GM12878 (cell line): ENCODE measurements at regions of chr7 and their contacts with region 1.

Region 1: DNA sequence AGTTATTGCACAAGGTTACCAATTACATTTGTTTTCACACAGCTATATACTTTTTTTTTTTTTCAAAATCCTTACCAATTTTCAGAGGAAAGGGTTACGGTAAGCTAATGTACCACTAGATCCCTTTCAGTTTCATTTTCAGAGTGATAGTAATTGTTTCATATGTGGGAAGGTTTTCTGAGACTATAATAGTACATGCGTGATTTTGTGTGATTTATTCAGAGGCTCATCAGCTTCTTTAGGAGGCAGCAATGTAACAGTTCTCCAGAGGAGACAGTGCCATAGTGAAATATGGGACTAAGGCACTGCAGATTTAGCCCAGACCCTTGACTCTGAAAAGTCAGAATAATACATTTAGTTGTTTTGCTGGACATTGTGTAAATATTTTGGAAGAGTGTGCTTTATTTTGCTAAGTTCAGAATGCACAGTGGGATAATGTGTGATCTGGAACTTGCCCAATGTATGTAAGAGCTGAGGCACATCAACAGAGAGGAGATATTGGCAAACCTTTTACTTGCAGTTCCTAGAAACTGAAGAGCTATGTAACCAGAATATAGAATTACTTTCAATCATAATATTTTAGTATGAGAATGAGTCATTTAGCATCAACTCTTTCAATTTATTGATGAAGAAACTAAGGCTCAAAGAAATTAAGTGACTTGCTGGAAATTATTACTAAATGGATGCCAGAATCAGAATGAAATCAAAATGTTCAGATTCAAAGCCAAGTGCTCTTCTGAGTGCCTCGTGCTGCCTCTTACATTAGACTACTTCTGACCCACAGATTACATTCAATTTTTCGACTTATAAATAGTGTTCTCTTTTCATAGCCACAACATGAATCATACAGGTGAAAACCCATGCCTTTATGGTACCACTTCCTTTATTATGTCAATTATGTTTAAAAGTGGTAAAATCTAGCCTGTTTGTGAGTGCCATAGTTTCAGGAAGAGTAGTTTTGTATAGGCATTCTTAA is 207.7 kb upstream of the TEX47 start:
- DNase-seq: peak; percentile 24
- ATAC-seq: peak; percentile 89
- H3K4me3 ChIP-seq: 0 out of 2 replicates have a peak overlapping the region, but pooled peaks have one; percentile 17
- H3K27ac ChIP-seq: peak overlapping the region; percentile 55
- H3K4me1 ChIP-seq: no peaks in the 10 kb centered on the region; the same call in 1 of the 2 replicates
- H3K27me3 ChIP-seq: no peaks in the 10 kb centered on the region
- CTCF ChIP-seq: no peak
- EP300 ChIP-seq: peak in 1 of 2 experiments; percentile 22; a peak in 1 of 4 replicates
- POLR2A ChIP-seq: no peak
- RAD21 ChIP-seq: no peak

Region 2: GRCh38 chr7:88635149-88635548 is 368.1 kb before region 1 on chr7:
- CTCF ChIA-PET with region 1: no interaction called
- POLR2A ChIA-PET with region 1: no interaction called
- RAD21 ChIA-PET with region 1: no interaction called
- SMC1A ChIA-PET with region 1: no interaction called
- in situ Hi-C with region 1: no loop called
- intact Hi-C with region 1: no loop called
- DNase-seq: no peak
- ATAC-seq: no peak
- H3K4me3 ChIP-seq: no peak overlapping the region
- H3K27ac ChIP-seq: no peak overlapping the region
- H3K4me1 ChIP-seq: no peaks in the 10 kb centered on the region
- H3K27me3 ChIP-seq: no peaks in the 10 kb centered on the region
- CTCF ChIP-seq: no peak
- EP300 ChIP-seq: no peak
- POLR2A ChIP-seq: no peak
- RAD21 ChIP-seq: no peak

Region 3: GRCh38 chr7:88771417-88771816 is 231.9 kb before region 1 on chr7:
- CTCF ChIA-PET with region 1: no interaction called
- POLR2A ChIA-PET with region 1: no interaction called
- RAD21 ChIA-PET with region 1: no interaction called
- SMC1A ChIA-PET with region 1: no interaction called
- in situ Hi-C with region 1: no loop called
- intact Hi-C with region 1: no loop called
- DNase-seq: no peak
- ATAC-seq: peak; percentile 90
- H3K4me3 ChIP-seq: no peak overlapping the region
- H3K27ac ChIP-seq: no peak overlapping the region
- H3K4me1 ChIP-seq: no peaks in the 10 kb centered on the region
- H3K27me3 ChIP-seq: no peaks in the 10 kb centered on the region
- CTCF ChIP-seq: no peak
- EP300 ChIP-seq: no peak
- POLR2A ChIP-seq: no peak
- RAD21 ChIP-seq: no peak

Region 4: GRCh38 chr7:89023877-89024276 is 20.6 kb after region 1 on chr7:
- CTCF ChIA-PET with region 1: interaction called, 9 read pairs
- POLR2A ChIA-PET with region 1: interaction called, 3 read pairs
- RAD21 ChIA-PET with region 1: interaction called, 66 read pairs
- SMC1A ChIA-PET with region 1: interaction called, 45 read pairs
- in situ Hi-C with region 1: no loop called
- intact Hi-C with region 1: no loop called
- DNase-seq: no peak
- ATAC-seq: peak; percentile 28; the same call in 2 of the 3 replicates
- H3K4me3 ChIP-seq: no peak overlapping the region
- H3K27ac ChIP-seq: no peak overlapping the region
- H3K4me1 ChIP-seq: no peaks in the 10 kb centered on the region
- H3K27me3 ChIP-seq: no peaks in the 10 kb centered on the region
- CTCF ChIP-seq: no peak
- EP300 ChIP-seq: no peak
- POLR2A ChIP-seq: no peak
- RAD21 ChIP-seq: no peak